CD8-positive, alpha-beta T cell (primary cell): ENCODE measurements at regions of chr1 and their contacts with region 1.

Region 1: DNA sequence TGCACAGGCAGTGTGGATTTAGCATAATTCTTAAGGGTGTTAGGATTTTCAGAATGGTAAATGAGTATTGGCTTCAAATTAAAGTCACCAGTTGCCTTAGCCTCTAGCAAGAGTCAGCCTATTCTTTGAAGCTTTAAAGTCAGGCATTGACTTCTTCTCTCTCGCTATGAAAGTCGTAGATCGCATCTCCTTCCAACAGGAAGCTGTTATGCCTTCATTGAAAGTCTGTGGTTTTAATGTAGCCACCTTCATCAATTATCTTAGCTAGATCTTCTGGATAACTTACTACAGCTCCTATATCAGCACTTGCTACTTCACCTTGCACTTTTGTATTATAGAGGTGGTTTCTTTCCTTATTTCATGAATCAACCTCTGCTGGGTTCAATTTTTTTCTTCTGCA is 320.2 kb downstream of the PTPRC start:
- DNase-seq: peak in 1 of 9 experiments; percentile 13
- ATAC-seq: peak; percentile 48
- H3K4me3 ChIP-seq: no peak overlapping the region
- H3K4me3 Mint-ChIP-seq: no peak overlapping the region
- H3K27ac ChIP-seq: no peak overlapping the region
- H3K27ac Mint-ChIP-seq: peak overlapping the region; percentile 8
- H3K4me1 ChIP-seq: peaks cover 29% of the 10 kb centered on the region
- H3K4me1 Mint-ChIP-seq: peaks cover 29% of the 10 kb centered on the region
- H3K27me3 ChIP-seq: no peaks in the 10 kb centered on the region
- H3K27me3 Mint-ChIP-seq: no peaks in the 10 kb centered on the region
- CTCF ChIP-seq: no peak

Region 2: DNA sequence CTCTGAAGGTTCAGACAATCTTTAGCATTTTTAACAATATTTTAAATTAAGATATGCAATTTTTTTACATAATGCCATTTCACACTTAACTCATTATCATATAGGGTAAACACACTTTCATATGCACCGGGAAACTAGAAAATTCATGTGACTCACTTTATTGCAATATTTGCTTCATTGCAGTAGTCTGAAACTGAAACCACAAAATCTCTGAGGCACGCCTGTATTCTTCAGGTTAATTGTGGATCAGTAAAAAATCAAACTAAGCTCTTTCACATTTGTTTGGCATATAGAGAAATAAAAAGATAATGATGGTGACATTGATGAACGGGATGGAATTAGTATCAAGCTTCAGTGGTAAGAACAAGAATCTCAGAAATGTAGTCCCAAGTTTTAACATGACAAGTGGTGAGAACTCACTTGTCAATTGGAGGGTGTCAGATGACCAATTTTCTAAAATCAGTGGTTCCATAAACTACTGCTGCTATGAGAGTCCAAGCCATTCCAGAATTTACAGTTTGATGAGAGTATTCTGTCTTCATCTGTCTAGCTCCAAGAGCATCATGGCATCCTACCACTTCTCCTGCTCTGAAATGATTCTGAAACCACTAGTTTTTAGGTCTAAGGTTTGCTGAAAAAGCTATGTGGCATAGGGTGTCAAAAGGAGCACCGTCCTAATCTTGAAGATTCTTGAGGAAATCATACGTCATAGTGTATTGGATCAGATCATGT is 39.2 kb before region 1 on chr1:
- CTCF ChIA-PET with region 1: no interaction called
- POLR2A ChIA-PET with region 1: no interaction called
- intact Hi-C with region 1: loop called in 1 of 2 experiments (anchors 5 kb)
- DNase-seq: peak in 2 of 9 experiments; percentile 18 to 57
- ATAC-seq: peak; percentile 78
- H3K4me3 ChIP-seq: no peak overlapping the region
- H3K4me3 Mint-ChIP-seq: peak overlapping the region; percentile 79
- H3K27ac ChIP-seq: peak overlapping the region in 1 of 2 experiments; percentile 58
- H3K27ac Mint-ChIP-seq: peak overlapping the region; percentile 85
- H3K4me1 ChIP-seq: peaks cover 16% of the 10 kb centered on the region
- H3K4me1 Mint-ChIP-seq: peaks cover 73% of the 10 kb centered on the region
- H3K27me3 ChIP-seq: no peaks in the 10 kb centered on the region
- H3K27me3 Mint-ChIP-seq: no peaks in the 10 kb centered on the region
- CTCF ChIP-seq: no peak

Region 3: GRCh38 chr1:199029855-199030254 is 70.8 kb after region 1 on chr1:
- CTCF ChIA-PET with region 1: no interaction called
- POLR2A ChIA-PET with region 1: no interaction called
- intact Hi-C with region 1: no loop called
- DNase-seq: no peak
- ATAC-seq: no peak
- H3K4me3 ChIP-seq: no peak overlapping the region
- H3K4me3 Mint-ChIP-seq: no peak overlapping the region
- H3K27ac ChIP-seq: no peak overlapping the region
- H3K27ac Mint-ChIP-seq: no peak overlapping the region
- H3K4me1 ChIP-seq: no peaks in the 10 kb centered on the region
- H3K4me1 Mint-ChIP-seq: peaks cover 14% of the 10 kb centered on the region
- H3K27me3 ChIP-seq: peaks cover 0 to 2% of the 10 kb centered on the region in 2 experiments
- H3K27me3 Mint-ChIP-seq: no peaks in the 10 kb centered on the region
- CTCF ChIP-seq: no peak